ENCODE measurements at regions of chr1 and their contacts with region 1.

Region 1: DNA sequence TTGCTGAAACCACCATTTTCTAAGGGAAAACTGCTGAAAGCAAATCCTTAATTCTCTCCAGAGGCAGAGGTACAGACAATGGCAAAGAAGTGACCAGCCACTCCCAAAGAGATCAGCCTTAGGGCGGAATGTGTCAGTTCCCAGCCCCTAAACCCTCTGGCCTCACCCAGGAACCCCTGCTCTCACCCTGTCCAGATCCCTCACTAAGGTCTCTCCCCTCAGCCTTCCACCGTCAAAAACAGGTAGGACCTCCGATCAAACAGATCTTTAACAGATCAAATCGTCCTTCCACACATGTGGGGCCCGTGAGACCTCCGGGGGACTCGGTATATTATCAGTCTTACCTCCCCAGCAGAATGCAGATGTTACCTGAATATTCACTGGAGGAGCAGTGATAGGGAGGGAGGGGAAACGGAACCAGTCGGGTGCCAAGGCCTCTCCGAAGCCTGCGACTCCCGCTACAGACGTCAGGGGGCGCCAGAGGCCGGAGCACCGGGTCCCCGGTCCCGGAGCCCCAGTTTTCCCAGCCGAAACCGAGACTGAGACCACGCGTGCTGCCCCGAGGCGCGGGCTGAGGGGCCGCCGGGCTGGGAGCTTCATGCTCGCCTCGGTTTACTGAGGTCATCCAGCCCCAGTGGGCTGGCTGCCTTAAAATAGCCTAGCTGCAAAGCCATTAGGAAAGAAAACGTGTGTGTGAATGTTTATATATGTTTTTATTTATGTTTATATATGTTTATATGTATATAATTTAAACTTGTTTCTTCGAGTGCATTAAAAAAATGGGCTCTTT is 23.6 kb downstream of the GPA33 start:
- DNase-seq: peak; percentile 59 to 90 (median 78)
- ATAC-seq: peak; percentile 95
- H3K4me3 ChIP-seq: no peak overlapping the region
- H3K4me3 Mint-ChIP-seq: peak overlapping the region in 4 of 10 donors; percentile 15 to 54 (median 37)
- H3K27ac ChIP-seq: no peak overlapping the region
- H3K27ac Mint-ChIP-seq: peak overlapping the region in 1 of 9 donors; percentile 58
- H3K4me1 ChIP-seq: no peaks in the 10 kb centered on the region
- H3K4me1 Mint-ChIP-seq: peaks cover 0 to 9% (median 5%) of the 10 kb centered on the region in 7 donors
- H3K27me3 ChIP-seq: no peaks in the 10 kb centered on the region
- H3K27me3 Mint-ChIP-seq: no peaks in the 10 kb centered on the region

Region 2: GRCh38 chr1:166489670-166490436 is 576.7 kb before region 1 on chr1:
- CTCF ChIA-PET with region 1: no interaction called
- POLR2A ChIA-PET with region 1: no interaction called
- intact Hi-C with region 1: loop called in 1 of 2 experiments (anchors 10 kb)
- DNase-seq: peak; percentile 29 to 69 (median 61)
- ATAC-seq: peak; percentile 83
- H3K4me3 ChIP-seq: peak overlapping the region; percentile 92
- H3K4me3 Mint-ChIP-seq: no peak overlapping the region
- H3K27ac ChIP-seq: peak overlapping the region; percentile 81
- H3K27ac Mint-ChIP-seq: no peak overlapping the region
- H3K4me1 ChIP-seq: peaks cover 15 to 17% of the 10 kb centered on the region in 2 donors
- H3K4me1 Mint-ChIP-seq: peaks cover 0 to 20% (median 0%) of the 10 kb centered on the region in 7 donors
- H3K27me3 ChIP-seq: no peaks in the 10 kb centered on the region
- H3K27me3 Mint-ChIP-seq: peaks cover 0 to 2% (median 0%) of the 10 kb centered on the region in 5 donors

Region 3: DNA sequence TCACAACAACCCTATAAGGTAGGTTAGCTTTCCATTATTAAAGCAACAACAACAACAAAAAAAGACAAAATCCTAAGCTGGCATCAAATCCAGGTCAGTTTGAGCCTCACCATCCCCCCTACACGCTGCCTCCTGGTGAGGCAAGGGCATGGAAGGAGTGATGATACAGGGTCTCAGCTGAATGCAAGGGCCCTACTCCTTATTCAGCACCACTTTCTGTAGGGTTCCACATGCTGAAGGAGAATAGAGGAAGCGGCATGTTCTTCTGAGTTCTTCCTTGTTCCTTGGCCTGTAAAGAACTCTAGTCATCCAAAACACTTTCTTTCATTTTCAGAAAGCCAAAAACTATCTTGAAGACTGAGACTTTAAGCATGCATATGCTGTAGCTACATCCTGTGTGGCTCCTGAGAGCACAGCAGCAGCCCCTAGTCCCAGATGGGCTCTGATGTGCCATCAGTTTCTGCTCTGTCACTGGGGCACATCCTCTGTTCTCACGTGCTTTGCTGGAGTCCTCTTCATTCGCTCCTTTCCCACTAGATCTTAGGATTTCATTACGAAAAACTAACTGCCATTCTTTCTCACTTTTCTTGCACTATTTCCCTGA is 97.4 kb before region 1 on chr1:
- CTCF ChIA-PET with region 1: no interaction called
- POLR2A ChIA-PET with region 1: no interaction called
- intact Hi-C with region 1: no loop called
- DNase-seq: peak in 6 of 9 donors; percentile 3 to 45 (median 32)
- ATAC-seq: peak; percentile 57
- H3K4me3 ChIP-seq: no peak overlapping the region
- H3K4me3 Mint-ChIP-seq: peak overlapping the region in 3 of 10 donors; percentile 21 to 42 (median 21)
- H3K27ac ChIP-seq: no peak overlapping the region
- H3K27ac Mint-ChIP-seq: peak overlapping the region in 4 of 9 donors; percentile 0 to 68 (median 32)
- H3K4me1 ChIP-seq: peaks cover 0 to 8% of the 10 kb centered on the region in 2 donors
- H3K4me1 Mint-ChIP-seq: peaks cover 10 to 44% (median 22%) of the 10 kb centered on the region in 7 donors
- H3K27me3 ChIP-seq: peaks cover 0 to 5% of the 10 kb centered on the region in 2 donors
- H3K27me3 Mint-ChIP-seq: peaks cover 8 to 27% (median 17%) of the 10 kb centered on the region in 5 donors

Region 4: GRCh38 chr1:167263819-167264464 is 197.4 kb after region 1 on chr1:
- CTCF ChIA-PET with region 1: no interaction called
- POLR2A ChIA-PET with region 1: no interaction called
- intact Hi-C with region 1: loop called (anchors 2 kb)
- DNase-seq: peak in 6 of 9 donors; percentile 5 to 28 (median 14)
- ATAC-seq: peak; percentile 42
- H3K4me3 ChIP-seq: no peak overlapping the region
- H3K4me3 Mint-ChIP-seq: no peak overlapping the region
- H3K27ac ChIP-seq: no peak overlapping the region
- H3K27ac Mint-ChIP-seq: no peak overlapping the region
- H3K4me1 ChIP-seq: peaks cover 12 to 29% of the 10 kb centered on the region in 2 donors
- H3K4me1 Mint-ChIP-seq: peaks cover 20 to 40% (median 35%) of the 10 kb centered on the region in 7 donors
- H3K27me3 ChIP-seq: no peaks in the 10 kb centered on the region
- H3K27me3 Mint-ChIP-seq: no peaks in the 10 kb centered on the region

Region 5: GRCh38 chr1:167409183-167409582 is 342.7 kb after region 1 on chr1:
- CTCF ChIA-PET with region 1: no interaction called
- POLR2A ChIA-PET with region 1: no interaction called
- intact Hi-C with region 1: loop called in 1 of 2 experiments (anchors 5 kb)
- DNase-seq: peak in 2 of 9 donors; percentile 19 to 25
- ATAC-seq: peak; percentile 45
- H3K4me3 ChIP-seq: no peak overlapping the region
- H3K4me3 Mint-ChIP-seq: no peak overlapping the region
- H3K27ac ChIP-seq: no peak overlapping the region
- H3K27ac Mint-ChIP-seq: peak overlapping the region in 1 of 9 donors; percentile 39
- H3K4me1 ChIP-seq: no peaks in the 10 kb centered on the region
- H3K4me1 Mint-ChIP-seq: peaks cover 0 to 18% (median 6%) of the 10 kb centered on the region in 7 donors
- H3K27me3 ChIP-seq: no peaks in the 10 kb centered on the region
- H3K27me3 Mint-ChIP-seq: no peaks in the 10 kb centered on the region

Region 6: GRCh38 chr1:167442124-167442848 is 375.8 kb after region 1 on chr1:
- CTCF ChIA-PET with region 1: no interaction called
- POLR2A ChIA-PET with region 1: no interaction called
- intact Hi-C with region 1: loop called (anchors 1 to 5 kb)
- DNase-seq: peak; percentile 79 to 89 (median 87)
- ATAC-seq: peak; percentile 90
- H3K4me3 ChIP-seq: no peak overlapping the region
- H3K4me3 Mint-ChIP-seq: peak overlapping the region; percentile 17 to 75 (median 52)
- H3K27ac ChIP-seq: peak overlapping the region; percentile 57
- H3K27ac Mint-ChIP-seq: peak overlapping the region; percentile 71 to 96 (median 92)
- H3K4me1 ChIP-seq: peaks cover 59 to 85% of the 10 kb centered on the region in 2 donors
- H3K4me1 Mint-ChIP-seq: peaks cover 51 to 99% (median 88%) of the 10 kb centered on the region in 7 donors
- H3K27me3 ChIP-seq: no peaks in the 10 kb centered on the region
- H3K27me3 Mint-ChIP-seq: no peaks in the 10 kb centered on the region

Region 7: DNA sequence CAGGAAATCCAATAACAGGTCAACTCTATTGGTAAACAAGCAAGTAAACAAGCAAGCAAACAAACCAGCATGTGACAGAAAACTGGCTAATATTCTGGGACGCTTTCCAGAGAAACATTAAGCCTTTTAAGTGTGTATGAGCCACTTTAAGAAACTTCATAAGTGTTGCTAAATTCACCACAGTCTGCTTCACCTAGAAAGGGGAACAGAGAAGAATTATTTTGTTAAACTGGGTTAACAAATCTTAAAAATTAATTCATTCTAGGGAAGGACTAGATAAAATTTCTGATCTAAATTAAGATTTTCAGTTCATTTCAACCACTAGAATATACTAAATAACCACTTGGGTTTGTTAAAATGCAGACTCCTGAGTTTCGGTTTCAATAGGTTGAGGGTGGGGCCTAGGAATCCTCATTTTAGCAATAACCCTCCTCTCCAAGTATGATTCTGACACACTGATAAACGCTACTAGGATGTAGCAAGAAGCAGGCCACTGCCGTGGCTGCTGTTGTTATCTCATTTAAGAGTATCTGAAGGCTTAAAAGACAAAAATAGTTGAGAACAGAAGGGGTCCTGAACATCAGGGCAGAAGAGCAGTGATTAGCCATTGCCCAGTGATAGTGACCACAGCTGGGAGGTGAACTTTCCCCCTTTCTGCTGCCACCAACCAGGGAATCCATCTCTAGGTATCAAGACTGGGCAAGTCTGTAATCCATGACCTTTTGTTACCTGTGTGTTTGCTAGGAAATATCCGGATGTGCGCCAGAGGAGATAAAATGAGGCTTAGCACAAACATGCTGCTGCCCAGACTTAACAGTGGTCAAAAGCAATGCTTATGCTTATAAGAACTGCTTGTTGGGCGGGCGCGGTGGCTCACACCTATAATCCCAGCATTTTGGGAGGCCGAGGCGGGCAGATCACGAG is 475.8 kb after region 1 on chr1:
- CTCF ChIA-PET with region 1: interaction called, 4 read pairs
- POLR2A ChIA-PET with region 1: no interaction called
- intact Hi-C with region 1: loop called in 1 of 2 experiments (anchors 2 kb)
- DNase-seq: no peak
- ATAC-seq: no peak
- H3K4me3 ChIP-seq: no peak overlapping the region
- H3K4me3 Mint-ChIP-seq: peak overlapping the region in 1 of 10 donors; percentile 15
- H3K27ac ChIP-seq: no peak overlapping the region
- H3K27ac Mint-ChIP-seq: peak overlapping the region in 2 of 9 donors; percentile 33 to 68
- H3K4me1 ChIP-seq: no peaks in the 10 kb centered on the region
- H3K4me1 Mint-ChIP-seq: peaks cover 3 to 56% (median 5%) of the 10 kb centered on the region in 7 donors
- H3K27me3 ChIP-seq: no peaks in the 10 kb centered on the region
- H3K27me3 Mint-ChIP-seq: no peaks in the 10 kb centered on the region